ENCODE measurements at regions of chr21 and their contacts with region 1.

Region 1: GRCh38 chr21:44873356-44874239 is at the start of gene PTTG1IP:
- DNase-seq: peak; percentile 86 to 97
- H3K4me3 ChIP-seq: peak within 1 kb of the TSS; percentile 75
- H3K27ac ChIP-seq: peak within 1 kb of the TSS; percentile 87
- H3K4me1 ChIP-seq: peaks cover 56% of the 10 kb centered on the region
- H3K27me3 ChIP-seq: no peaks in the 10 kb centered on the region
- CTCF ChIP-seq: no peak
- total RNA-seq, gene PTTG1IP: 162 and 174 TPM in 2 replicates

Region 2: DNA sequence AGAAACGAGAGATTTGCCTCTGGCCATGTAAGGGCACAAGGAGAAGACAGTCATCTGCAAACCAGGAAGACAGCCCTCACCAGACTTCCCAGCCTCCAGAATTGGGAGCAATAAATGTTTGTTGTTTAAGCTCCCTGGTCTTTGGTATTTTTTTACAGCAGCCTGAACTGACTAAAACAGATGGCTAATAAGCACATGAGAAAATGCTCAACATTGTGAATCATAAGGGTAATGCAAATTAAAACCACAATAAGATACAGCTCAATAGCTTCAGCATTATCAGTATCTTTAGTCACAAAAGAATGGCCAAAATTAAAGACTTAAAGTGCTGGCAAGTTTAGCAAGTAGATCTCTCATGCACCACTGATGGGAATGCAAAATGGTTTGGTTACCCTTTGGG is 83.7 kb before region 1 on chr21:
- CTCF ChIA-PET with region 1: no interaction called
- POLR2A ChIA-PET with region 1: no interaction called
- intact Hi-C with region 1: no loop called
- DNase-seq: no peak
- H3K4me3 ChIP-seq: no peak overlapping the region
- H3K27ac ChIP-seq: no peak overlapping the region
- H3K4me1 ChIP-seq: no peaks in the 10 kb centered on the region
- H3K27me3 ChIP-seq: no peaks in the 10 kb centered on the region
- CTCF ChIP-seq: no peak

Region 3: GRCh38 chr21:44801468-44802395 is 71.9 kb before region 1 on chr21 and contains the start of gene UBE2G2:
- CTCF ChIA-PET with region 1: no interaction called
- POLR2A ChIA-PET with region 1: no interaction called
- intact Hi-C with region 1: loop called (anchors 2 kb)
- DNase-seq: peak; percentile 47 to 77
- H3K4me3 ChIP-seq: peak within 1 kb of the TSS; percentile 88
- H3K27ac ChIP-seq: no peak within 1 kb of the TSS
- H3K4me1 ChIP-seq: peaks cover 11% of the 10 kb centered on the region
- H3K27me3 ChIP-seq: no peaks in the 10 kb centered on the region
- CTCF ChIP-seq: no peak; the same call in 1 of the 2 replicates
- total RNA-seq, gene UBE2G2: 51.9 and 52.7 TPM in 2 replicates

Region 4: GRCh38 chr21:44817506-44817880 is 56.1 kb before region 1 on chr21:
- CTCF ChIA-PET with region 1: no interaction called
- POLR2A ChIA-PET with region 1: no interaction called
- intact Hi-C with region 1: loop called (anchors 5 kb)
- DNase-seq: peak in 1 of 2 experiments; percentile 87
- H3K4me3 ChIP-seq: peak overlapping the region; percentile 55; the same call in 1 of the 2 replicates
- H3K27ac ChIP-seq: no peak overlapping the region
- H3K4me1 ChIP-seq: no peaks in the 10 kb centered on the region; the same call in 1 of the 2 replicates
- H3K27me3 ChIP-seq: no peaks in the 10 kb centered on the region
- CTCF ChIP-seq: no peak

Region 5: DNA sequence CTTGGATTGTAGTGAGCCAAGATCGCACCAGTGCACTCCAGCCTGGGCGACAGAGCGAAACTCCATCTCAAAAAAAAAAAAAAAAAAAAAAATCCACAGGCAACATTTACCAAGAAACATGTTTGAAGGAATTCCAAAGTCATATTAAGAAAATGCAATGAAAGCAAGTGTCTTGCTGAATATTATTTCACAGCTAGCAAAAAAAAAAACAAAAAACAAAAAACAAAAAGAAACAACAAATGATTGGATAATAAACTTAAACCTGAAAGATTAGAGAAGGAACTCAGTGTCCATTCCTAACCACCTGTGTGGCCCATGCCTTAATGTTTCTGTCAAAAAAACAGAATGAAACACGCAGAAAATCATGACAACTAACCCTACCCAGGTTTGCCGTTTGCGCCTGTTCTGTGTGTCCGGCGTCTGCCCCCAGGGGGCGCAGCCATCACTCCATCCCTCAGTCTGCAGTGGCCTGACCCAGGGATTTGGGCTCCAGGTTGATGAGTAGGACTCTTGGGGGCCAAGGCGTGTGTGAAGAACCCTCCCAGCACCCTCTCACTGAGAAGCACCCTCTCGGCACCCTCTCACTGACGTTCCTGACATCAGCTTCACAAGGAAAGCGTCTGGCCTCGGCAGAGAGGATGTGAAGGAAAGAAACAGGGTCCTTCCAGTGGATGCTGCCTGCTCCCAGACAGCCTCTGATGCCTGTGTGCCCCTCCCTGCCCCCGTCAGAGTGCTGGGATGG is 19.1 kb after region 1 on chr21:
- CTCF ChIA-PET with region 1: no interaction called
- POLR2A ChIA-PET with region 1: no interaction called
- intact Hi-C with region 1: no loop called
- DNase-seq: peak in 1 of 2 experiments; percentile 64
- H3K4me3 ChIP-seq: no peak overlapping the region
- H3K27ac ChIP-seq: no peak overlapping the region
- H3K4me1 ChIP-seq: no peaks in the 10 kb centered on the region
- H3K27me3 ChIP-seq: no peaks in the 10 kb centered on the region
- CTCF ChIP-seq: peak; percentile 84

Region 6: GRCh38 chr21:44911389-44912157 is 38.0 kb after region 1 on chr21:
- CTCF ChIA-PET with region 1: no interaction called
- POLR2A ChIA-PET with region 1: interaction called, 3 read pairs
- intact Hi-C with region 1: loop called (anchors 5 kb)
- DNase-seq: peak; percentile 84
- H3K4me3 ChIP-seq: no peak overlapping the region
- H3K27ac ChIP-seq: peak overlapping the region; percentile 74
- H3K4me1 ChIP-seq: peaks cover 57% of the 10 kb centered on the region
- H3K27me3 ChIP-seq: no peaks in the 10 kb centered on the region
- CTCF ChIP-seq: peak; percentile 76

Region 7: DNA sequence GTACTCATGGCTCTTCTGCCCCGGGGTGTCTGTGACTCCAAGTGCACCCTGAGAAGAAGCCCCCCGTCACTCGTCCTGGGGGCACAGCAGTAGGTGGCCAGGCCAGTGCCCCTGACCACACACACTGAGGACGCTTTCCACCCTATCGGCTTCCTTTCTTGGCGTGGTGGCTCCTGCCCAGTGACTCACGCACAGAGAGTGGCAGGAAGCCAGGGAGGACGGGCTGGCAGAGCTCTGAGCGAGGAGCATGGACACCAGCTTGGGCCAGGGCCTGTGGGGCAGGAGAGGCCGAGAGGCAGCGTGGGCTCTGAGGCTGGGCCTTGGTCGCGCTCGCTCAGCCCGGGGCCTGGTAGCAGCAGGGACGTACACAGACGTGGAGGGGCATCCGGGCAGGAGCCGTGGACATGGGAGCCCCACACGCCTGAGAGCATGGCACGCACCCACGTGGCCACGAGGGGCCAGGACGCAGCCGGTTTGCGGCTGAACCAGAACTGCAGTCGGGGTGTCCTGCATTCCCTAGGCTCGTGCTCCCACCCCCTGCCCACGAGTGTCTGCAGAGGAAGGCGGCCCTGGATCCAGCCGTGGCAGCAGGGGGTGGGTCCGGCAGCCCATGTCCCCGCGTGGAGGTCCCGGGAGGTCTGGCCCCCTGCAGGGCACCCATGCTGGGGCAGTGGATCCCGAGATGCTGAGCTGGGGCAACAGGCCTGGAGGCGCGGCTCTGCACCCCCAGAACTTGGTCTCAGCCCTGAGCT is 127.6 kb after region 1 on chr21:
- CTCF ChIA-PET with region 1: no interaction called
- POLR2A ChIA-PET with region 1: no interaction called
- intact Hi-C with region 1: no loop called
- DNase-seq: peak; percentile 52 to 73
- H3K4me3 ChIP-seq: no peak overlapping the region
- H3K27ac ChIP-seq: no peak overlapping the region
- H3K4me1 ChIP-seq: 0 out of 2 replicates have a peak, but pooled peaks cover 3% of the 10 kb centered on the region
- H3K27me3 ChIP-seq: no peaks in the 10 kb centered on the region
- CTCF ChIP-seq: no peak

Region 8: DNA sequence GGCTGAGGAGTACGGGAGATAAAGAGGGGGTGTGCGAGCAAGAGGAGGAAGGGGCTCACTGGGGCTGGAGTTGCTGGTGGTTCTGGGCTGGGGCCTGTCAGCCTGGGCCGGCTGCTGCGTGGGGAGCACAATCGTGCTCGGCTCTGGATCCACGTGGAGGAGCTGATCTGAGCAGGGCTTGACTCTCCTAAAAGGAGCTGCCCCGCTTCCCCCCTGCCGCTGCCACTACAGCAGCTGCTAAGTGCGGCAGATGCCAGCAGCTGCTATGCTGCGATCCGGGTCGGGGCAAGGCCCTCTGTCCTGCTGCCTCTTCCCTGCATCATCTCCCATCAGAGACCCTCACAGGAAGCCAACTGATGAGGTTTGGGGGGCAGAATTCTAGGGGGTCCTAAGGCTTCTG is 935.8 kb after region 1 on chr21:
- CTCF ChIA-PET with region 1: interaction called, 10 read pairs
- POLR2A ChIA-PET with region 1: no interaction called
- intact Hi-C with region 1: no loop called
- DNase-seq: no peak
- H3K4me3 ChIP-seq: no peak overlapping the region
- H3K27ac ChIP-seq: no peak overlapping the region
- H3K4me1 ChIP-seq: no peaks in the 10 kb centered on the region
- H3K27me3 ChIP-seq: peaks cover 83% of the 10 kb centered on the region
- CTCF ChIP-seq: no peak